ENCODE measurements at regions of chr5 and their contacts with region 1.

Region 1: GRCh38 chr5:82165740-82166530 is 112.2 kb downstream of the RPS23 start:
- DNase-seq: peak; percentile 60 to 83
- ATAC-seq: peak; percentile 98 to 100 (median 100)
- H3K4me3 ChIP-seq: no peak overlapping the region
- H3K27ac ChIP-seq: peak overlapping the region; percentile 71
- H3K4me1 ChIP-seq: peaks cover 14% of the 10 kb centered on the region
- H3K27me3 ChIP-seq: no peaks in the 10 kb centered on the region
- CTCF ChIP-seq: peak; percentile 71

Region 2: DNA sequence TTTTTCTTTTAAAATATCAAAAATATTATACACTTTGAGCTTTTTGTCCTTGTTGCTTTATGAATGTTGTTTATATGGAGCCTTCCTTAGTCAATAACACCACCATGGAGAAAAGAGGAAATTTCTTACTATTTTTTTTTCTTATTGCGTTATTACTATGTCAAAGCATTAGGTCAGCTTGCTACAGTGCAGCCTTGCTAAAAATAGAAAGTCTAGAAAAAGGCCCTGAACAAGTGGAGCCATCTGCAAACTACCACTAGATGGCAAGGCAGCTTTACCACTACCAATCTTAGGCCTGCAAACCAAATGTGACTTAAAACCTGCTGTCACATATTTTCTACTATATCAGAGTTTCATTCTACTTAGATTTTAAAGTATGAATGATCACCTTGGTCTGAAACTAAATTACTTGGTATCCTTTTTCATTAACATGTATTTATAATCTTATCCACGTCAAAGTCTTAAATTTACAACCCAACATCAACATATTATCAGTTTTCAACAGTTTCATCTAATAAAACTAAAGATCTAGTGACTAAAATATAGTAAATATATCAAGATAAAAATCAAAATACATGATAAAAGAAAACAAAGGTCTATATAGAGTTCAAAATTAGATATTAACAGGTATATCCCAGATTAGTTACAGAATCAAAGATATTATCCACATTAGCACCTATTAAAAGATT is 658.9 kb before region 1 on chr5:
- intact Hi-C with region 1: loop called (anchors 5 kb)
- DNase-seq: no peak
- ATAC-seq: peak; percentile 95 to 99 (median 99)
- H3K4me3 ChIP-seq: no peak overlapping the region
- H3K27ac ChIP-seq: peak overlapping the region; percentile 7
- H3K4me1 ChIP-seq: peaks cover 8% of the 10 kb centered on the region
- H3K27me3 ChIP-seq: no peaks in the 10 kb centered on the region
- CTCF ChIP-seq: peak; percentile 91

Region 3: GRCh38 chr5:81851481-81852178 is 314.3 kb before region 1 on chr5:
- intact Hi-C with region 1: loop called (anchors 5 to 10 kb)
- DNase-seq: peak; percentile 96 to 98
- ATAC-seq: peak; percentile 85 to 88 (median 86)
- H3K4me3 ChIP-seq: peak overlapping the region; percentile 71
- H3K27ac ChIP-seq: peak overlapping the region; percentile 95
- H3K4me1 ChIP-seq: peaks cover 58% of the 10 kb centered on the region
- H3K27me3 ChIP-seq: no peaks in the 10 kb centered on the region
- CTCF ChIP-seq: no peak

Region 4: DNA sequence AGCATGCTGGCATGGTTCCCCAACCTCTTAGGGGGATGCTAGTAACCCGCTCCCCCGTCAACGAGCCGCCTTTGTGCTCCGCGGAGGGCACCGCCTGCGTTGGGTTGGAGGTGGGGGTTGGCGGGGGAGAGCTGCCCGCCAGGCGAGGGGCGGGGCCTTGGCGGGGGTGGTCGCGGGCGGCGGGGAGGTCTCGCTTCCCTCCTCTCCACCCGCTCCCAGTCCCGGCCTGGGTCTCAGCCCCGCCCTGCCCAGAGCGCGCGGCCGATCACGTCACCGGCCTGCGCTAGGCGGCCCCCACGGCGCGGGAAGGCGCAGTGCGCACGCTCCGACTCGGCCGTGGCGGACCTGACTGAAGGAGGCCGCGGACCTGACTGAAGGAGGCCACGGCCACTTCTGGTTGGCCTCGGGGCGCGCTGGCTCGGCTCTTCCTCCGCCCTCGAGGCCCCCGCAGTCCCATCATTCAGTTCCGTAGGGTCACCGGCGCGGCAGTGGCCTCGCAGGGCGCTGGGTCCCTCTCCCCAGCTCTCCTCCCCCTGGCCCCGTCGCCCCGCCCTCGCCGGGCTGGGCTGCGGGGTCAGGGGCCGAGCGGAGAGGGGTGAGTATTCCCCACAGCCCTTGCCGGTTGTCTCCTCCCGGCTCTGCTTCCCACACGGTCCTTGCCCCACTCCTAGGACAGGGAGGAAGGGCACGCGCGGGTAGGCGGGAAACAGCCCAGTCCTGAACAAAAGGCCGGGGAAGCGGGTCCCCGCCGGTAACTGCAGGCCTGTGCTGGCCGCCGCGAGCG is 194.0 kb before region 1 on chr5 and contains the start of gene ATG10:
- intact Hi-C with region 1: loop called (anchors 5 kb)
- DNase-seq: peak; percentile 92 to 95
- ATAC-seq: peak; percentile 97 to 99 (median 98)
- H3K4me3 ChIP-seq: peak within 1 kb of the TSS; percentile 80
- H3K27ac ChIP-seq: peak within 1 kb of the TSS; percentile 97
- H3K4me1 ChIP-seq: no peaks in the 10 kb centered on the region
- H3K27me3 ChIP-seq: no peaks in the 10 kb centered on the region
- CTCF ChIP-seq: no peak
- total RNA-seq, gene ATG10: 4.6 to 7.4 (median 6.2) TPM

Measured in psoas muscle (tissue), 8 donors.